ENCODE measurements at regions of chr4 and their contacts with region 1.

Region 1: DNA sequence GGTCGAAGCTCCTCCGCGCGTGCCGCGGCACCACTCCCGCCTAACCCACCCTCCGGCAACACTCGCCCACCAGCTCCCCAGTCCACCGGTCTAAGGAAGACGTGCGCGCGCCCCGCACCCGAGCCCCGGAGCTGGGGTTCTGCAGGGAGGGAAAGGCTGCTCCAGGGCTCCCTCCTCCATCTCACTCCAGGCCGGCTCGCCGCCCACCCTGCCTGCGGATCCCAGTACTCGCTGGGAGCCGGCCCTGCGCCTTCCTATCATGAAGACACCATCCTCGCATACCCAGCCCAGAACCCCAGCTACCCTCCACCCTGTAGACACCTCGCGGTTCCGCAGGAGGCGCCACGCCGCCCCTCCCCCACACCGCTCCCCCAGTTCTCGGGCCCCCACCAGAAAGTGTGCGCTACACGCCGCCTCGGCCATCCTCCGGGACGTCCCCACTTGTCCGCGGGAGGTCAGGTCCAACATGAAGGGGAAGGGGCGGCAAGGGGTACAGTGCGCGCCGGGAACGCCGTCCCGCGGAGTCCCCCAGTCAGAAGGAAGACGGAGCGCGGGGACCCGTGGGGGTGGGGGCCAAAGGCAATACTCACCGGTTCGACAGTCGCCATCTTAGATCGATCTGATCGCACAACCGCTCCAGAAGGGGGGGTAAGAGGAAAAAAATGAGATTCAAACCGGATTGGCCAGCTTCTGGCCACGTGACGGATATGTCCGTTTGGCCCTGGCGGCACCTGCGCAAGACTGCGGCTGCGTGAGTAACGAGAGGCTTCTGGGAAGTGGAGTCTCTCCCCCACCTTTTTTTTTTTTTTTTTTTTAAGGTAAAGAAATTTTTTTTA is at the start of gene EIF4E:
- DNase-seq: peak; percentile 98
- ATAC-seq: peak; percentile 80
- H3K4me3 Mint-ChIP-seq: peak within 1 kb of the TSS; percentile 92
- H3K27ac Mint-ChIP-seq: peak within 1 kb of the TSS; percentile 100
- H3K4me1 Mint-ChIP-seq: peaks cover 47% of the 10 kb centered on the region
- H3K27me3 Mint-ChIP-seq: no peaks in the 10 kb centered on the region
- total RNA-seq, gene EIF4E: 132 to 149 TPM

Region 2: GRCh38 chr4:98143001-98143899 is 785.5 kb before region 1 on chr4 and contains the start of gene STPG2:
- CTCF ChIA-PET with region 1: interaction called, 3 read pairs
- POLR2A ChIA-PET with region 1: no interaction called
- intact Hi-C with region 1: loop called (anchors 1 kb)
- DNase-seq: peak; percentile 96
- ATAC-seq: peak; percentile 100
- H3K4me3 Mint-ChIP-seq: peak within 1 kb of the TSS; percentile 96
- H3K27ac Mint-ChIP-seq: peak within 1 kb of the TSS; percentile 99
- H3K4me1 Mint-ChIP-seq: peaks cover 22% of the 10 kb centered on the region
- H3K27me3 Mint-ChIP-seq: no peaks in the 10 kb centered on the region
- total RNA-seq, gene STPG2: 0.14 to 0.25 TPM

Region 3: DNA sequence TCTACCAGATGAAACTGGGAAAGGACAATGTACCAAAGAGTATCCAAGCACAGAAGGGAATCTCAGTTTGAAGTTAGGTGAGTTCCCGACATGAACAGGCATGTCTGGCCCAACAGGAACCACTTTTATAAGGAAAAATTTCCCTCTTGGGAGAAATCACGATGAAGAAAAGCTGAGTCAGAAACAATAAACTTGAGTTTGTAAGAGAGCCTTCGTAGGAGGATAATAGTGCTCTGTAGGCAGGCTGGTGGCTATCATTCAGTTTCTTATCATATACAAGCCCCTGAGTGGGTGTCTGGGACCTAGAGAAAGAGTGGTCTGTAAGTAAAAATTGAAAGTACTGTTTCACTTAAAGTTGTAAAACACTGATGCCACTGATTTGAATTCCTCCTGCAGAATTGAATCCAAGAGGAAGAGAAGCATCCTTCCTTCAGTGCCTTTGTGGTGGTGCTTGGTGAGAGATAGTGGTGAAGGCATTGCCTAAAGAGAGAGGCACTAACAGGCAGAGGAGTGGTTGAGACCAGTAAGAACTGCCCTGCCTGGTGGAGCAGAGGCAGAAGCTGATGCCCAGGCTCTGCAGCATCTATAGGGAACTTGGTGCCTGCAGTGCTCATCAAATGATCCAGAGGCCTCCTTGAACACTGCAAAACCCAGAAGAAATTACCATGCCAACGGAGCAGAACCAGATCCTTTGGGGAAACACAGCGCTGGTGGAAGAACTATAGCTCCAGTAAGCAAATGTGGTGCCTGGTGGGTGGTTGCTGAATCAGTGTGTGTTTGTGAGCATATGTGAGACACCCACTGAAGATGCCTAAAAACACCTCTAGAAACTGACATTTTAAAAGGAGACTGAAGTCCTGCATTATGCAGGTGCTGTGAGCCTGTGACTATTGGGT is 35.1 kb after region 1 on chr4:
- CTCF ChIA-PET with region 1: no interaction called
- POLR2A ChIA-PET with region 1: interaction called, 14 read pairs
- intact Hi-C with region 1: no loop called
- DNase-seq: no peak
- ATAC-seq: no peak
- H3K4me3 Mint-ChIP-seq: no peak overlapping the region
- H3K27ac Mint-ChIP-seq: peak overlapping the region; percentile 15
- H3K4me1 Mint-ChIP-seq: peaks cover 2% of the 10 kb centered on the region
- H3K27me3 Mint-ChIP-seq: no peaks in the 10 kb centered on the region

Region 4: DNA sequence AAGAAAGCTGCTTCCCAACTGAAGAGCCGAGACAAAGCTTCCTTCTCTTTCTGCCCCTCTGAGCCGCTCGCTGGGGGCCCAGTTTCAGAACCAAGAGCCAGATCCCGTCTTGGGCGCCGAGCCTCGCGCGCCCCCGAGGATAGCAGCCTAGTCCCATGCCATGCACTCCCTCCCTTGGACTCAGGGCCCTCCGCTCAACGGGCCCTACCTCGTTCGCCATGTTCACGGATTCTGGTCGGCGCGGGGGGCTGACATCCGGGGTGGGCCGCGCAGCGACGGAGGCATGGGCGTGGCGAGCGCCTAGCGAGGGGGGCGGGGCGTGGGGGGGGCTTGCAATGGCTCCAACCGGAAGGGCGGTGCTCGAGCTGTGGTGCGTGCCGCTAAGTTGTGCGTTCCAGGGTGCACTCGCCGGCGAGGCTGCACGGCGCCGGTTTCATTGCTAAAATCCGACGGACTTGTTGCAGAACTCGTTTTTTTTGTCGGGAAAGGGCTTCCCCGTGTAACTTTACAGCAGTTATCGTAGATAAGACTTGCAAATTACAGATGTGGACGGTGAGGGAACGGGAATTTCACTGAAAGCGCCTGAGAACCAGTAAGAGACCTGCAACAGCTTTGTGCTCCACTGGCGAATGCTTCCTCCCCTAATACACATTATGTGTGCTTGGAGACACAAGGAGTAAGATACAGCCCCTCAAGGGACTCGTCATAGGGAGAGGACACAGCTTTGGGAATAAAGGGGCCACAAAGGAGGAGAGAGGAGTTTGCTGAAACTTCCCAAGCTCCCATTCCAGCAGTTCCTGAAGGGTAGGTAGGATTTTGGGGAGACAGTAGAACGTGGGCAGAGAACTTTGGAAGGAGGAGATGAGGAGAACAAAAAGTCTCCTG is 160.0 kb after region 1 on chr4 and contains the start of gene ADH5:
- CTCF ChIA-PET with region 1: interaction called, 3 read pairs
- POLR2A ChIA-PET with region 1: interaction called, 3 read pairs
- intact Hi-C with region 1: loop called (anchors 1 to 5 kb)
- DNase-seq: peak; percentile 96
- ATAC-seq: peak; percentile 97
- H3K4me3 Mint-ChIP-seq: peak within 1 kb of the TSS; percentile 98
- H3K27ac Mint-ChIP-seq: peak within 1 kb of the TSS; percentile 99
- H3K4me1 Mint-ChIP-seq: peaks cover 42% of the 10 kb centered on the region
- H3K27me3 Mint-ChIP-seq: no peaks in the 10 kb centered on the region
- total RNA-seq, gene ADH5: 81.3 to 119 TPM

Region 5: GRCh38 chr4:99949034-99949998 is 1020.6 kb after region 1 on chr4:
- CTCF ChIA-PET with region 1: no interaction called
- POLR2A ChIA-PET with region 1: no interaction called
- intact Hi-C with region 1: loop called in 1 of 2 experiments (anchors 1 kb)
- DNase-seq: peak; percentile 96
- ATAC-seq: peak; percentile 52
- H3K4me3 Mint-ChIP-seq: no peak overlapping the region
- H3K27ac Mint-ChIP-seq: no peak overlapping the region
- H3K4me1 Mint-ChIP-seq: peaks cover 33% of the 10 kb centered on the region
- H3K27me3 Mint-ChIP-seq: no peaks in the 10 kb centered on the region